Activated CD4-positive, alpha-beta T cell treated with anti-CD3 and anti-CD28 coated beads for 36 hours (primary cell): ENCODE measurements at regions of chr6 and their contacts with region 1.

Region 1: DNA sequence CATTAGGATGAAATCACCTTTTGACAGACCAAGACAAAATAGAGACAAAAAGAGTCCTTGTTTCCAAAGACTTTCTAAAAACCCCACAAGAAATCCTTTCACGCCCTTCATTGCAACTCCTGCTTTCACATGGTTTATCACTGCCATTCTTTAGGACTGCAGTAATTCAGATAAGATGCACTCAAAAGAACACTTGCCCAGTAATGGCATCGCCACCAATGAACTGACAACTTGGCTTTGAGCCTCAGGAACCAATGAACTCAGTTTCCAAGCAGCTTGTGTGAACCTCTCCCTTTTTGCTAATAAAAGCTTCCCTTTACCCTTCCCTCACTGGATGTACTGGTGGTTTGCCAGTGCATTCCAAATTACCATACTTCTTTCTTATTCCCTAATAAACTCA is 21.8 kb downstream of the OSTM1 start:
- DNase-seq: no peak
- ATAC-seq: no peak
- H3K4me3 Mint-ChIP-seq: no peak overlapping the region
- H3K27ac Mint-ChIP-seq: no peak overlapping the region
- H3K4me1 Mint-ChIP-seq: no peaks in the 10 kb centered on the region
- H3K27me3 Mint-ChIP-seq: no peaks in the 10 kb centered on the region

Region 2: GRCh38 chr6:107560657-107561056 is 492.0 kb before region 1 on chr6:
- CTCF ChIA-PET with region 1: no interaction called
- POLR2A ChIA-PET with region 1: no interaction called
- intact Hi-C with region 1: no loop called
- DNase-seq: no peak
- ATAC-seq: no peak
- H3K4me3 Mint-ChIP-seq: no peak overlapping the region
- H3K27ac Mint-ChIP-seq: no peak overlapping the region
- H3K4me1 Mint-ChIP-seq: no peaks in the 10 kb centered on the region
- H3K27me3 Mint-ChIP-seq: peaks cover 14% of the 10 kb centered on the region

Region 3: GRCh38 chr6:107674995-107675738 is 377.5 kb before region 1 on chr6:
- CTCF ChIA-PET with region 1: interaction called, 5 read pairs
- POLR2A ChIA-PET with region 1: no interaction called
- intact Hi-C with region 1: loop called (anchors 1 kb)
- DNase-seq: peak; percentile 95
- ATAC-seq: peak; percentile 98
- H3K4me3 Mint-ChIP-seq: peak overlapping the region; percentile 33
- H3K27ac Mint-ChIP-seq: peak overlapping the region; percentile 81
- H3K4me1 Mint-ChIP-seq: peaks cover 10% of the 10 kb centered on the region
- H3K27me3 Mint-ChIP-seq: no peaks in the 10 kb centered on the region

Region 4: GRCh38 chr6:107977283-107977682 is 75.4 kb before region 1 on chr6:
- CTCF ChIA-PET with region 1: interaction called, 7 read pairs
- POLR2A ChIA-PET with region 1: no interaction called
- intact Hi-C with region 1: loop called (anchors 1 to 5 kb)
- DNase-seq: no peak
- ATAC-seq: no peak
- H3K4me3 Mint-ChIP-seq: no peak overlapping the region
- H3K27ac Mint-ChIP-seq: no peak overlapping the region
- H3K4me1 Mint-ChIP-seq: no peaks in the 10 kb centered on the region
- H3K27me3 Mint-ChIP-seq: no peaks in the 10 kb centered on the region

Region 5: DNA sequence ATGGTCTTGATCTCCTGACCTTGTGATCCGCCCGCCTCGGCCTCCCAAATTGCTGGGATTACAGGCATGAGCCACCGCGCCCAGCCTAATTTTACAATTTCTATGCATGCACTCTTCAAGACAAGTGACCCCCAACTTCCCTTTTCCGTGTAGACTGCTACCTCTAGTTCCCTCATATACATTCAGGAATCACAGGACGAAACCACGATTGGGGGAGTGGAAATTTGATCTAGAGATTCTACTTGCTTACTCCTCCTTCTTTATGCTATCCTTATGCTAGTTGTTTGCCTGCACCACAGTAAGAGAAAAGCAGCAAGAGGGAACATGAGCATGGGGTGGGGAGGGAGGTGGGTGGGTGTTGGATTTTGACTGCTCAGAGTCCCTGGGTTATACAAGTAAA is 13.0 kb before region 1 on chr6:
- CTCF ChIA-PET with region 1: interaction called, 18 read pairs
- POLR2A ChIA-PET with region 1: interaction called, 3 read pairs
- intact Hi-C with region 1: no loop called
- DNase-seq: no peak
- ATAC-seq: no peak
- H3K4me3 Mint-ChIP-seq: no peak overlapping the region
- H3K27ac Mint-ChIP-seq: no peak overlapping the region
- H3K4me1 Mint-ChIP-seq: no peaks in the 10 kb centered on the region
- H3K27me3 Mint-ChIP-seq: no peaks in the 10 kb centered on the region